HCT116 (cell line): ENCODE measurements at regions of chr13 and their contacts with region 1.

Region 1: DNA sequence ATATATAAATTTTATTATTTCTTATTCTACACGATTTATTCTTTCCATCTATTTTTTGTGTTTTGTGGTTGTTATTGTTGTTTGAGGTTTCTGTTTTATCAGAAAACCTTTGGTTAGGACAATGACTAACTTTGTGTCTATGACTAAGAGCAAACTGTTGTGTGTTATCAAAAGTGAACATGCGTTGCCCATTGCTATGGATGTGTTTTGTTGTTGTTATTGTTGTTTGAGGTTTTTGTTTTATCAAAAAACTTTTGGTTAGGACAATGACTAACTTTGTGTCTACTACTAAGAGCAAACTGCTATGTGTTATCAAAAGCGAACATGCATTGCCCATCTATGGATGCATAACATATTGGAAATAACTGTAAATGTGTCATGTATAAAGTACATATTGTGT is 692.3 kb downstream of the SLITRK1 start:
- DNase-seq: no peak
- ATAC-seq: no peak
- H3K4me3 ChIP-seq: no peak overlapping the region
- H3K27ac ChIP-seq: no peak overlapping the region
- H3K4me1 ChIP-seq: no peaks in the 10 kb centered on the region
- H3K27me3 ChIP-seq: no peaks in the 10 kb centered on the region
- CTCF ChIP-seq: no peak
- POLR2A ChIP-seq: no peak
- RAD21 ChIP-seq: no peak

Region 2: GRCh38 chr13:82993417-82993816 is 196.6 kb before region 1 on chr13:
- CTCF ChIA-PET with region 1: no interaction called
- POLR2A ChIA-PET with region 1: no interaction called
- RAD21 ChIA-PET with region 1: no interaction called
- intact Hi-C with region 1: loop called (anchors 10 kb)
- DNase-seq: no peak
- ATAC-seq: no peak
- H3K4me3 ChIP-seq: no peak overlapping the region
- H3K27ac ChIP-seq: no peak overlapping the region
- H3K4me1 ChIP-seq: no peaks in the 10 kb centered on the region
- H3K27me3 ChIP-seq: no peaks in the 10 kb centered on the region
- CTCF ChIP-seq: no peak
- POLR2A ChIP-seq: no peak
- RAD21 ChIP-seq: no peak